ENCODE measurements at regions of chr11 and their contacts with region 1.

Region 1: DNA sequence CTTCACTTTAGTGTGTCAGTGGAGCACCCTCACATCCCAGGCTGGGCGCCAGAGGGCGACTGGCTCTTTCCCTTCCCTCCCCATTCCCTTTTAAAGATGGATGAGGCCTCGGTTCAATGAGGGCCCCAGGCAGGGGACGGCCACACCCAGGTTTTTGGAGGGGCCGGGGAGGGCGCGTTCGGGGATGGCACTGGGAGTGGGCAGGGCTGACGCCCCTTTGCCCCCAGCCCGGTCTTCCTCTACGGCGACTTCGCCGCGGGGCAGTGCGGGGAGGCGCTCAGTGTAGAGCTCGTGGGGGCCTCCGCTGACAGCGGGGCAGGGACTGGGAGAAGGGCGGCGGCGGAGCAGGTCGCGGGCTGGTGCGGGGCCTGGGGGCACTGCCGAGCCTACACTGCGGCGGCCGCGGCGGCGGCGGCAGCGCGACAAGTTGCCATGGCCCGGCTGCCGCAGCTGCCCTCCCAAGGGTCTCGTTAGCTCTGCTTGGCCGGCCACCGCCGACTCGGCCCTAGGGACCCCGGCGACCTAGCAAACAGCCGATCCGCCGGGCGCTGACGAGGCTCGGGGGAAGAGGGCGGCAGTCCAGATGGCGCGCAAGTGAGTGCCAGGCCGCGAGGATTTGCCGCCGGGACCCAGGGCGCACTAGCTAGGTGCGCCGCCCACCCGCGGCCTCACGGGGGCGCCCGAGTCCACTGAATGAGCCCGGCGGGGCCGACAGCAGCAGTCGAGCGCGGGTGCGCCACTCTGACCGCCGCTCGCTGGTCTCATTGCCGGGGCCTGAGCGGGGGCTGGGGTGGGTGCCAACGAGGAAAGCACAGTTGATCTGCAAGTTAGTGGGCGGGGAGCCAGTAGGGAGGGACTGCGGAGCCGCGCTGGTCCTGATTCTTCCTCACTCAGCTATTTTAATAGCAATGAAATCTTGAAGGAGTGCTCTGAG is 92.7 kb downstream of the RRM1 start:
- DNase-seq: peak; percentile 88
- H3K4me3 ChIP-seq: peak overlapping the region; percentile 35 to 64 (median 52)
- H3K27ac ChIP-seq: peak overlapping the region; percentile 47 to 73 (median 66)
- H3K4me1 ChIP-seq: peaks cover 0 to 6% (median 5%) of the 10 kb centered on the region in 4 donors
- H3K27me3 ChIP-seq: no peaks in the 10 kb centered on the region
- CTCF ChIP-seq: peak; percentile 80 to 98 (median 94)
- EP300 ChIP-seq: no peak
- POLR2A ChIP-seq: no peak

Region 2: DNA sequence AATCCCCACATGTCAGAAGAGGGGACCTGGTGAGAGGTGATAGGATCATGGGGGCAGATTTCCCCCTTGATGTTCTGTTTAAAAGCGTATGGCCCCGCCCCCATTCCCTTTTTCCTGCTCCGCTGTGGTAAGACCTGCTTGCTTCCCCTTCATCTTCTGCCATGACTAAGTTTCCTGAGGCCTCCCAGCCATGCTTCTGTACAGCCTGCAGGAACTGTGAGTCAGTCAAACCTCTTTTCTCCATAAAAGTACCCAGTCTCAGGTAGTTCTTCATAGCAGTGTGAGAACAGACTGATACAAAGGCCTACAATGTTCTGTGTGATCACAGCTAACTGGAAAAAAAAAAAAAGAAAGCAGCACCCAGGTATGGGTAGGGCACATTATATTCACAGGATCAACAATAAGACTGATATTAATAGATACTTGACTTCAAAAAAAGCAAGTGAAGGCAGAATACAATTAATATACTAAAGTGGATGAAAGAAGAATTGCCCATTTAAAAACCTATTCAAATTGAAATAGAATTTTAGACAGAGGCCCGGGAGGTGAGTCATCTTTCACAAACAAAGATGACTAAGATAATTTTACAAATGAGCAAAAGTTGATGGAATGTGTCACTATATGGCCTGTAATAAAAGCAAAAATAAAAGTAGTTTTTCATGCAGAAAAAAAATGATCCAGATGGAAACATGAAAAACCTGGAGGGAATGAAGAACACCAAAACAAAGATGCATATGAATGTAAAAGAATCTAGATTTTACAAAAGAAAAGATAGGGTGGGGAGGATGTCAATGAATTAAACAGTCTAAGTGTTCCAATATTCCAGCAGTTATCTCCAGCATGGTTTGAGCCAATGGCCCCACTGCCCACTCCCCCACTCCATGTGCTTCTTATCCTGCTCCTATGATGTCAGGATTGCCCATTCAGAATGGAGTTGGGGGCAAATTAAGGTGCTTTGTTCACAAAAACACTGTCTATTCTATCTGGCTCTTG is 293.5 kb after region 1 on chr11:
- in situ Hi-C with region 1: loop called in 1 of 4 experiments (anchors 10 kb)
- intact Hi-C with region 1: no loop called
- DNase-seq: no peak
- H3K4me3 ChIP-seq: no peak overlapping the region
- H3K27ac ChIP-seq: no peak overlapping the region
- H3K4me1 ChIP-seq: no peaks in the 10 kb centered on the region
- H3K27me3 ChIP-seq: no peaks in the 10 kb centered on the region
- CTCF ChIP-seq: no peak
- EP300 ChIP-seq: no peak
- POLR2A ChIP-seq: no peak

Region 3: DNA sequence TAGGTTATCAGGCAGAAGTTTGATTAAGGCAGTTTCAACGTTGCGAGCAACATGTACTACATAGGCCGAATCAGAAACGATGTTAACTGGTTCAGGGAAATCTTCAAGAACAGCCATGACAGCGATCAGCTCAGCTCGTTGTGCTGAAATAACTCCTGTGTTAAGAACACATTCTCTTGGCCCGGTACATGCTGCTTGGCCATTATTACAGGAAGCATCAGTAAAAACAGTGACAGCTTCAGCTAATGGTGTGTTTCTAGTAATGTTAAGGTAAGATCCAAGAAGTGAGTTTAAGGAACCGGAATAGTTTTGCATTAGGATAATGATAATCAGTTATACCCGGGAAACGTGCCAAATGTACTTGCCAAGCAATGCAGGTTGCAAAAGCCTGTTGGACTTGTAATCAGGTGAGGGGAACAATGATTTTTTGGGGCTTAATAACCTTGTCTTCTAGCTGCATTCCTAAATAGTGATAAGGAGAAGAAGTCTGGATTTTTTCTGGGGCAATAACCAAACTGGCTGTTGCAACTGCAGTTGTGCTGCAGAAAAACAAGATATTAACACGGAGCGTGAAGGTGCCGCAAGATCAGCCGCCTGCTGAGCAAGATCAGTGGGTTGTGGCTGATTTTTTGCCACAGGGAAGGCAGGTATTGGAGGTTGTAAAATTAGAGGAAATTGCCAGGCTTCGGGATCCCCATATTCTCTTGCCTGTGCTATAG is 309.4 kb after region 1 on chr11:
- in situ Hi-C with region 1: loop called in 3 of 4 experiments (anchors 5 to 10 kb)
- intact Hi-C with region 1: loop called (anchors 2 kb)
- DNase-seq: no peak
- H3K4me3 ChIP-seq: no peak overlapping the region
- H3K27ac ChIP-seq: no peak overlapping the region
- H3K4me1 ChIP-seq: peaks cover 0 to 5% (median 1%) of the 10 kb centered on the region in 4 donors
- H3K27me3 ChIP-seq: peaks cover 23% of the 10 kb centered on the region
- CTCF ChIP-seq: no peak
- EP300 ChIP-seq: no peak
- POLR2A ChIP-seq: no peak

Region 4: DNA sequence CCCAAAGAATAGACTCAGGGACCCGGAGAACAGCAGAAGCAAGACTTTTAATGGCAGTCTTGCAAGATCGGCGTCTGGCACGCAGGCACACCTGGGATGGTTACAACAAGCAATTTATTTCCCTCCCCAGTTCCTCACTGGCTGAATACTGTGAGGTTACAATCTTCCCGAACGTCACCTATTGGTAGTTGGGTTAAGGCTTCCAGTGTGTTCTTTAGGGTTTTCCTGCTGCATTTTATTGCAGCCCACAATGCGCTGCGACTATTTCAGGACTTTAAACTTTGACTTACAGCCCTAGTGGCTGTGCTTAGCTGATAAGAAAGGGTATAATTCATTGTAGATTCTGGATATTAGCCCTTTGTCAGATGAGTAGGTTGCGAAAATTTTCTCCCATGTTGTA is 432.2 kb after region 1 on chr11:
- in situ Hi-C with region 1: no loop called
- intact Hi-C with region 1: no loop called
- DNase-seq: peak; percentile 20
- H3K4me3 ChIP-seq: no peak overlapping the region
- H3K27ac ChIP-seq: no peak overlapping the region
- H3K4me1 ChIP-seq: no peaks in the 10 kb centered on the region
- H3K27me3 ChIP-seq: no peaks in the 10 kb centered on the region
- CTCF ChIP-seq: no peak
- EP300 ChIP-seq: no peak
- POLR2A ChIP-seq: no peak

Measured in transverse colon (tissue), 4 donors.